ENCODE measurements at regions of chr6 and their contacts with region 1.

Region 1: DNA sequence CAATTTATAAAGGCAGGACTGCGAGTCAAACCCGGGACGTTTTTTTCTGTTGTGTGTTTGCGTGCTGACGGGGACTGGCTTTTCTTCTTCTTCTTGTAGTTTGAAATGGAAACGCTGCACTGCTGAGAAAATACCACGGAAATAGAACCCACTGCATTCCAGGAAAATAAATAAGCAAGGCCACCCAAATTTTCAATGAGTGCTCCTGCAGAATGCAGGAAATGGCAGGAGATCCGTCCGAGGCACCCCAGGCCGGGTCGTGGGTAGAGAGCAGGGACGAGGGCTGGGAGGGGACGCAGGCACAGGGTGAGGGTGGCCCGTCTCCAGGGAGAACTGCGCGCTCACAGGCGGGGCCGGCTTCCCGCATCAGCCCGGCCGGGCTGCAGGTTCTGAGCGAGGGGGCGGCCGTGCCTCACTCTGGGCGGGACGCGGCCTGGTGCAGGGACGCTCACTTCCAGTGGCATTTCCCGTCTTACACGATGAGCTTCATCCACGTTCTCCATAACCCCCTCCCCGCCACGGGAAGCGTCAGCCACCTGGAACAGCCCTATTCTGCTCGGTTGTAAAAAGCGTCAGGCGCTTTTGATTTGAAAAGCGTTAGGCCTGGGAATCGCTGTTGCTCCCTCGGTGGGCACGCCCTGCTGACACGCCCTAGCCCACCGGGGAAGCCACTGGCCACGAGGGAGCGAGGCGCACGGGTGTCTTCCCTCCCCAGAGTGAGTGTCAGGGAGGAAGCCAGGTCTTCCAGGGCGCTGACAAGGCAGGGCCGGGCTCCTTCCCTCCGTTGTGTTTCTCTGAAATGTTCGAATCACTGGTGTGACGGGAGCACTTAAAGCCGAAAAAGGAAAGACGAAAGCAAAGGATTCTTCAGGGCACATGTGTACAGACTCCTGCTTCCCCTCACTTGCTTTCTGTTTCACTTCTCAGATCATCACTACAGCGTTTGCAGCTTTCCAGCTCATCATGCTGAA is 17.9 kb upstream of the EXOC2 start:
- DNase-seq: peak; percentile 58 to 65 (median 62)
- ATAC-seq: peak; percentile 88
- H3K4me3 ChIP-seq: peak overlapping the region; percentile 20
- H3K4me1 ChIP-seq: peaks cover 4% of the 10 kb centered on the region
- CTCF ChIP-seq: no peak

Region 2: DNA sequence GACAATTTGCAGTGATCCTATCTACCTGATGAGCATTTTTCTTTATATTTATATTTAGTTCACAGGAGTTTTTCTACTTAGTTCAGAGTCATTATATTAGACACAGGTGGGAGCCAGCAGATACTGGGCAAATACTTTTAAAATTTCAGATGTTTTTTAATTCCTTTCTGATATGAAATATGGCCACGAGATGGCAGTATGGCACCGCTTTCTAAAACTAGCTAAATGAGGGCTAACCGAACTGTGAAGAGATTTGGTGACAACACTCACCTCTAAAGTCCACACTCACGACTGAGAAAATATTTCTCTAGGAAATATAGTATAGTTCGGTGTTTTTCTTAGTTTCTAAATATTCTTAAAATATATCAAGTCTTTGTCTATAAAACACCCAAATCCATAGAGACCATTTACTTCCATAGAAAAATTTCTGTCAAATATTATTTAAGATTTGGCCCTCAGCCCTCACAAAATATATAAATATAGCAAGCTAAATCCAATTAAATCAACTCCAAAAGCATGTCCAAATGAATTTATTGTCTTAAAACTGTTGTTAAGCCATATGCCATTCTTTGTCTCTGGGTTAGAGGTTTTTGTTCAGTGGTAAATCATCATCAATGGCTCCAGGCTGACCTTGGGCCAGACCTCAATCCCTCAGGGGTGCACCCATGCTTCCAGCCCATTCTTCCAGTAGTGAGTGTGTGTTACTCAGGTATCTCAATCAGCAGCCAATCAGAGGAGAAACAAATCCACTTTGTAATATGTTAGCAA is 117.6 kb before region 1 on chr6:
- intact Hi-C with region 1: loop called in 1 of 2 experiments (anchors 10 kb)
- DNase-seq: peak in 1 of 3 donors; percentile 84
- ATAC-seq: peak; percentile 60
- H3K4me3 ChIP-seq: no peak overlapping the region
- H3K4me1 ChIP-seq: no peaks in the 10 kb centered on the region
- CTCF ChIP-seq: peak; percentile 38

Region 3: DNA sequence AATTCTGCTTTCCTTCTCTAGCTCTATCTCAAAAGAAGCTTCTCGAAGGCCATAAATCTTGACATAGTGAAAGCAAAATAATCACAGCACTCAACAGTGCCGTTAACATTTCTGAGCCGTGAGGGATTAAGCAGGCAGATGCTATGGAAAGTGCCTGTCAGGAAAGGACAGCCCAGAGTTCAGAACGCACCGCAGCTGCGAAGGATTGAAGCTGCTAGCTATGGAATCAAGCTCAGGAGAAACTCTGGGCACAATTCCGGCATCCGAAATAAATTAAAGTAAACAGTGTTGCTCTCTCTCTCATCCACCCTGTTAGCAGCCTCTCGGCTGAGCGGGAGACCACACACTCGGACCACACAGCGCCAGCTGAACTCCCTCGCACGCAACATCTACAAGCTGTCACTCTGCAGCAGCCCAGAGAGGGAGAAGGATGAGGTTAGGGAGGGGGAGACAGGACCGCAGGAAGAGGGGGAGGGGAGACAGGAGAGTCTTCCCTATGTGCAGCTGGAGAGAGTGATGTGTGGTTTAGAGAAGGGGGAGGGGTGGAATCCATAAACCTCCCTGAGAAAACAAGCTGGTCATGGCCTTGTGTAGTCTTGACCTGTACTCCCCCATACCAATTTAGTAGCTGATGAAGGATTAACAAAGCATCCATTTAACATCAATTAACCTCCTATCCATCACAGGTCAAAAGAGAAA is 27.0 kb before region 1 on chr6:
- intact Hi-C with region 1: no loop called
- DNase-seq: peak in 2 of 3 donors; percentile 40 to 54
- ATAC-seq: peak; percentile 62
- H3K4me3 ChIP-seq: no peak overlapping the region
- H3K4me1 ChIP-seq: peaks cover 4% of the 10 kb centered on the region
- CTCF ChIP-seq: no peak

Region 4: GRCh38 chr6:1390133-1390804 is 679.4 kb after region 1 on chr6:
- intact Hi-C with region 1: loop called in 1 of 2 experiments (anchors 5 kb)
- DNase-seq: no peak
- ATAC-seq: no peak
- H3K4me3 ChIP-seq: peak overlapping the region; percentile 19
- H3K4me1 ChIP-seq: peaks cover 4% of the 10 kb centered on the region
- CTCF ChIP-seq: no peak

Measured in mucosa of descending colon (tissue), 3 donors.